Dendritic cell treated with granulocyte-macrophage colony-stimulating factor and Interleukin-4, amounts not matched to agents 40 ng/mL and 50 ng/mL, for 4 days (primary cell): ENCODE measurements at regions of chr7 and their contacts with region 1.

Region 1: DNA sequence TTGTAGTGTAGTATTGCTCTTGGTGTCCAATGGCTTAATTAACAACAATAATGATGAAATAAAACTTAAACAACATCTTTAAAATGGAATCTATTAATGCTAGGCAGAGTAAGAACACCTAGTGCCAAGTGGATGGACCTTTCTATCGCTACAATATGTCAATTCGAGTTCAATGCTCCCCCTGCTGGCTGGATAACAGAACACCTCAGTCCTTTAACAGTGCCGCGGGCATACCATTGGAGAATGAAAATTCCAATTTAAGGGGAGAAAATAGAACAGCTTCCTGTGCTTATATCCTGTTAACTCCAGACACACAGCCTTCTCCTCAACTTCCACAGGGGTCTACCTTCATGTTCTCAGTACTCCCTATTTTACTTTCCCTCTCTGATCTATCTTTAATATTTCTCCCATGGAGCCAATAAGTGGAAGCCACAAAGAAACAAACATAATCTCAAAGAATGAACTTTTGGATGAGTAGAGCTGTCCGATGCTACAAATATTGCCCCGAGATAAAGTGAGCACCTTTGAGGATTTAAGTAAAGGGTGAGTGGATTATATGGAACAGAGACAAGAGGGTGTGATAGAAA is 41.4 kb downstream of the COL1A2 start:
- H3K4me3 Mint-ChIP-seq: no peak overlapping the region
- H3K27ac Mint-ChIP-seq: no peak overlapping the region
- H3K4me1 Mint-ChIP-seq: peaks cover 4% of the 10 kb centered on the region
- H3K27me3 Mint-ChIP-seq: peaks cover 8% of the 10 kb centered on the region

Region 2: DNA sequence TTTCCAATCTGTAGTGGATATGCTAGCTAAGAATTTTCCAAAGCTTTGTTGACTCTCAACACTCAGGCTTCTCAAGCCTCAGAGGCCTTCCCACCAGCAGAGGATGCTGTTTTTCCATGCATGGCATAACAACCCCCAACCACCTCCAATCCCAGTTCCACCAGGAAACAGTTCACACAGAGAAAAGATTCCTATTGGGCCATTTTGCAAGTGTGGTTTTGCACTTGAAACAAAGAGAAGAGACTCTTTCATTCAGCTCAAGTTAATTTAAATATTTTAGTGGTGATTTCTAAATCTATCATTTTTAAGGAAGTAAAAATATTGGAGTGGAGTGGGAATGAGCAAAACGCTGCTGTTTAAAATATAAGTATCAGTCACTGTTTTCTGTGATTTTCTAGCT is 147.0 kb before region 1 on chr7:
- intact Hi-C with region 1: loop called (anchors 1 kb)
- H3K4me3 Mint-ChIP-seq: no peak overlapping the region
- H3K27ac Mint-ChIP-seq: no peak overlapping the region
- H3K4me1 Mint-ChIP-seq: no peaks in the 10 kb centered on the region
- H3K27me3 Mint-ChIP-seq: peaks cover 3% of the 10 kb centered on the region

Region 3: GRCh38 chr7:94338921-94339371 is 97.2 kb before region 1 on chr7:
- intact Hi-C with region 1: no loop called
- H3K4me3 Mint-ChIP-seq: no peak overlapping the region
- H3K27ac Mint-ChIP-seq: no peak overlapping the region
- H3K4me1 Mint-ChIP-seq: no peaks in the 10 kb centered on the region
- H3K27me3 Mint-ChIP-seq: no peaks in the 10 kb centered on the region